GM13977 (cell line): ENCODE measurements at regions of chr11 and their contacts with region 1.

Region 1: GRCh38 chr11:112588252-112588694 is 327.6 kb upstream of the PLET1 start:
- DNase-seq: peak; percentile 37
- CTCF ChIP-seq: peak; percentile 78

Region 2: GRCh38 chr11:111992206-111992855 is 595.9 kb before region 1 on chr11:
- in situ Hi-C with region 1: no loop called
- DNase-seq: no peak
- CTCF ChIP-seq: no peak

Region 3: GRCh38 chr11:112280268-112281126 is 307.8 kb before region 1 on chr11:
- in situ Hi-C with region 1: loop called (anchors 10 kb)
- DNase-seq: peak; percentile 83
- CTCF ChIP-seq: peak; percentile 75

Region 4: DNA sequence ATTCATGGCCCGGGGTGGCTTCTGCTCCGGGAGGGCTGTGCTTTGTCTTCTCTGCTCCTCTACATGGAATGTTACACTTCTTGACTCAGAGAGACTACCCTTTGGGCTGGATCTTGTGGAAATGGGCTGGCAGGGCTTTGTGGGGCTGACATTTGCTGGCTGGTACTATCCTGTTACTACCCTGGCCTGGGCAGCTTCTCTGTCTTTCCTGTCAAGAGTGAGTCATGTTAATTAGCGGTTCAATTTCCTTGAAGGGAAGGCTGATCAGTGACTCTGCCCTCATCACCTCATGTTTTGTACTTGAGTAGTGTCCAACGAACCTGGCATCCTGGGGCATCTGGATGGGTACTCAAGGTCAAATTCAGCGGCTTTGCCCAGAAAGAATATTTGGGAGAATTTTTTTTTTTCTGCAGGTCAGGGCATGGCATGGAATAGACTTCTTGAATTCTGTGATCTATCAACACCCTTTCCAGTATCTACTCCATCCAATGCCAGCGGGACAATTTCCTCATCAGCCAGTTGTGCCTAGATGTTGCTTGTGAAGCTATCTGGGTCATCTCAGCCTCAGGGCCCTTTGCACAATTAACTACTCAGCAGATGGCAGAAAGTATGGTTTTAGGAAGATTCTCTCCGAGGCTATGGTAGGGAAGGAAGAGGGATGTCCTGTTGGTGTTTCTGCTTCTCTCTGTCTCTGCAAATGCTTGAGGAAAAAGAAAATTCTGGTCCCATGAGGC is 187.1 kb before region 1 on chr11:
- in situ Hi-C with region 1: no loop called
- DNase-seq: no peak
- CTCF ChIP-seq: no peak

Region 5: DNA sequence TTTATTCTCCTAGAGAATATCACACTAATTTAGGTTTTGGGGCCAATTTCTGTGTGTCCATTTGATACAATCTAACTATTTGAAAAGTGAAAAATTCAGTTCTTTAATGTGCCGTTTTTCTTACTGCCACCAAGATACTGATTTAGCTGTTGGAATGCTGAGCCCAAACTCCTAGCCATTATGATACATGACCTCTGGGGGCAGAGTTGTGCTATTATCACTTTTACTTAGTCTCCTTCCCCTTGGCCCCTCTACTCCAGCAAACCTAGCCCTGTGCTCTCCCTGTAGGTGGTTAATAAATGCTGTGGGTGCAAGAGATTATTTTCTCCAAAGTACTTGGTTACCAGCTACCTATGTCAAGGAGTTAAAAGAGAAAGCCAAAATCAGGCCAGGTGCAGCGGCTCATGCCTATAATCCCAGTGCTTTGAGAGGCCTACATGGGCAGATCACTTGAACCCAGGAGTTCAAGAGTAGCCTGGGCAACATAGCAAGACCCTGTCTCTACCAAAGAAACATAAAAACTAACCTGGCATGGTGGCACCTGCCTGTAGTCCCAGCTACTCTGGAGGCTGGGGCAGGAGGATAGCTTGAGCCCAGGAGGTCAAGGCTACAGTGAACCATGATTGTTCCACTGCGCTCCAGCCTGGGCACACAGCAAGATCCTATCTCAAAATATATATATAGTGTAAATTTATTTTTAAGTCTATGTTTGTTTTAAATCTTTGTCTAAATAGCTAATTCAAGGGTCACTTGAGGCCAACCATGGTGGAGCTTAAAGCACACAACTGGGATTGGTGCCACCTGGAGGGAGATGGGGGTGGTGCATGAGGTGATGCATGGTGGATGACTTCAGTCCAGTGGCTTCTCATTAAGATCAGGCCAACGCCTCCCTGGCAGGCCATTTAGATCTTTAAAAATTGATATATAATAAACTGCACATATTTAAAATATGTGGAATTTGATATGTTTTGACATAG is 134.4 kb before region 1 on chr11:
- in situ Hi-C with region 1: no loop called
- DNase-seq: peak; percentile 40
- CTCF ChIP-seq: peak; percentile 49

Region 6: GRCh38 chr11:112795142-112795815 is 207.0 kb after region 1 on chr11:
- in situ Hi-C with region 1: loop called (anchors 10 kb)
- DNase-seq: peak; percentile 66
- CTCF ChIP-seq: peak; percentile 83

Region 7: GRCh38 chr11:112806876-112807275 is 218.6 kb after region 1 on chr11:
- in situ Hi-C with region 1: no loop called
- DNase-seq: no peak
- CTCF ChIP-seq: no peak